Activated naive CD4-positive, alpha-beta T cell treated with anti-CD3 and anti-CD28 coated beads for 36 hours (primary cell): ENCODE measurements at regions of chr12 and their contacts with region 1.

Region 1: GRCh38 chr12:113184900-113185773 is at the starts of genes DDX54 and RITA1:
- DNase-seq: peak; percentile 92
- H3K4me3 Mint-ChIP-seq: peak within 1 kb of the TSS; percentile 97
- H3K27ac Mint-ChIP-seq: peak within 1 kb of the TSS; percentile 92
- H3K4me1 Mint-ChIP-seq: peaks cover 46% of the 10 kb centered on the region
- H3K27me3 Mint-ChIP-seq: no peaks in the 10 kb centered on the region
- total RNA-seq, gene DDX54: 114 to 116 TPM
- total RNA-seq, gene RITA1: 14.0 to 16.1 TPM

Region 2: DNA sequence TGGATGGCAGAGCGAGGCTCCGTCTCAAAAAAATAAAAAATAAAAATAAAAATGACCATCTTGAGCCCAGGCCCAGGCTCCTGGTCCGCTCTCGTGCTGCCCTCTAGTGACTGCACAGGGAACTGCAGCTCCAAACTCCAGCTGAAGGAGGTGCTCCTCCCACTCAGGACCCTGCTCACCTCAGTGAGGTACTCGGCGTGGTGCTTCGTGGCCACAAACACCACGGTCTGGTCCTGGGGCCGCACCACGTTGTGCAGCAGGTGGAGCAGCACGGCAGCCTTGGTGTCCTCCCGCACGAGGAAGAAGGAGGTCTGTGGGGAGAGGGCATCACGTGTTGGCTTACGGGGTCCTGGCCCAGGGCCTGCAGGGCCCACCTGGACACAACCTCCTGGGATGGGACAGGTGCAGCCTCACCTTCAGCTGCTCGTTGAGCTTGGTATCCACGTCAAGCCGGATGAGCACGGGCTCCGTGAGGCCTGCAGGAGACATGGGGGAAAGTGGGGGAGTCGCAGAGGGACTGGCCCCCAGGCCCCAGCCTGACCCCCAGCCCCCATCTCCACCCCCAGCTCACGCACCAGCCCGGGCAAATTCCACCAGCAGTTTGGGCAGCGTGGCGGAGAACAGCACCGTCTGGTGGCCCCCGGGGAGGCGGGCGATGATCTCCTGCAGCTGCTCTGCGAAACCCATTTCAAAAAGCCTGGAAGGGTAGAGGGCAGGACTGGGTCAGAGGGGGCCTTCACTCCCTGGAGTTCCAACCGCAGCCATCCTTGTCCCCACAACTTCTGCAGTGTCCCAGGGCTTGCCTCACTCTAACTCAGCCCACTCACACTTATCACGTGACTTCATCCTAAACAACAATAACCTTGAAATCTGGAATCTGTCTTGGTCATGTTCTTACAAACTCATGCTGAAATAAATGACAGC is 10.4 kb before region 1 on chr12:
- CTCF ChIA-PET with region 1: interaction called, 10 read pairs
- intact Hi-C with region 1: no loop called
- DNase-seq: peak; percentile 86
- H3K4me3 Mint-ChIP-seq: no peak overlapping the region
- H3K27ac Mint-ChIP-seq: no peak overlapping the region
- H3K4me1 Mint-ChIP-seq: no peaks in the 10 kb centered on the region
- H3K27me3 Mint-ChIP-seq: no peaks in the 10 kb centered on the region

Region 3: DNA sequence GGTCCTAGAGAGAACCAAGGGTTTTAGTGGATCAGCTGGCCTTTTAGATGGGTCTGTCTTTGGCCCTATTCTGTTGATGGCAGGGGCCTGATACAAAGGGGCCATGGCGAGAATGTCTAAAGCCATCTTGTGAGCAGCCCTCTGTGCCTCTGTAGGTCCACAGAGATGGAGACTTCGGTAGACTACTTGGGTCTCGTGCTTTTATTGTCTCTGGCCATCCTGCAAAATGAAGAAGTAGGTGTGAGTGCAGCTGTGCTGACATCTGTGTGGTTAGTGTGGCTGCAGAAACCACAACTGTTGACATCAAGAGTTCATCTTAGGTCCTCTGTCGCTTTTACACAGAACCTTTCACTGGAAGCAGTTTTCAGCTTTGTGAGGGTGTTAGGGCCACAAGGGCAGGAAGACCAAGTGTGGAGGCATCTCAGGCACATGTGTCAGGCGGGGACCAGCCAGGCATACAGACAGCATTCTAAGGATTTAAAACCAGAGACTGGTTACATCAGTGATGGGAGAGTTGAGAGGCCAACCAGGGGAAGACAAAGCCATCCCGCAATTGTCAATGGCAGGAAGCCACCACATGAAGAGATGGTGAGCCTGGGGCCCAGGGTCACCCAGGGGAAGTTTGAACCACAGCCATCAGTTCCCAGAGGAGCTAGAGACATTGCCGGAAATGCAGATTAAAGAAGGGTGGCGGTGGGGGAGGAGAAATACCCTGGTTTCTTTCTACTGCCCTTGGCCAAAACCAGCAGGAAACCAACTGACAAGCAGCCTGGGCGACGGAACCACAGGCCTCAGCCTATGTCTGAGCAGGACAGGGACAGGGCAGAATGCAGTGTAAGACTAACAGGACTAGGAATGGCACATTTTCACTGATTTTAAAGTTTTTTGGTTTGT is 23.2 kb after region 1 on chr12:
- CTCF ChIA-PET with region 1: interaction called, 3 read pairs
- intact Hi-C with region 1: loop called (anchors 1 kb)
- DNase-seq: peak; percentile 89
- H3K4me3 Mint-ChIP-seq: peak overlapping the region; percentile 34
- H3K27ac Mint-ChIP-seq: peak overlapping the region; percentile 95
- H3K4me1 Mint-ChIP-seq: peaks cover 41% of the 10 kb centered on the region
- H3K27me3 Mint-ChIP-seq: no peaks in the 10 kb centered on the region

Region 4: GRCh38 chr12:113232840-113233585 is 47.9 kb after region 1 on chr12:
- CTCF ChIA-PET with region 1: interaction called, 3 read pairs
- intact Hi-C with region 1: loop called (anchors 1 kb)
- DNase-seq: peak; percentile 83
- H3K4me3 Mint-ChIP-seq: peak overlapping the region; percentile 66
- H3K27ac Mint-ChIP-seq: peak overlapping the region; percentile 88
- H3K4me1 Mint-ChIP-seq: peaks cover 70% of the 10 kb centered on the region
- H3K27me3 Mint-ChIP-seq: no peaks in the 10 kb centered on the region

Region 5: DNA sequence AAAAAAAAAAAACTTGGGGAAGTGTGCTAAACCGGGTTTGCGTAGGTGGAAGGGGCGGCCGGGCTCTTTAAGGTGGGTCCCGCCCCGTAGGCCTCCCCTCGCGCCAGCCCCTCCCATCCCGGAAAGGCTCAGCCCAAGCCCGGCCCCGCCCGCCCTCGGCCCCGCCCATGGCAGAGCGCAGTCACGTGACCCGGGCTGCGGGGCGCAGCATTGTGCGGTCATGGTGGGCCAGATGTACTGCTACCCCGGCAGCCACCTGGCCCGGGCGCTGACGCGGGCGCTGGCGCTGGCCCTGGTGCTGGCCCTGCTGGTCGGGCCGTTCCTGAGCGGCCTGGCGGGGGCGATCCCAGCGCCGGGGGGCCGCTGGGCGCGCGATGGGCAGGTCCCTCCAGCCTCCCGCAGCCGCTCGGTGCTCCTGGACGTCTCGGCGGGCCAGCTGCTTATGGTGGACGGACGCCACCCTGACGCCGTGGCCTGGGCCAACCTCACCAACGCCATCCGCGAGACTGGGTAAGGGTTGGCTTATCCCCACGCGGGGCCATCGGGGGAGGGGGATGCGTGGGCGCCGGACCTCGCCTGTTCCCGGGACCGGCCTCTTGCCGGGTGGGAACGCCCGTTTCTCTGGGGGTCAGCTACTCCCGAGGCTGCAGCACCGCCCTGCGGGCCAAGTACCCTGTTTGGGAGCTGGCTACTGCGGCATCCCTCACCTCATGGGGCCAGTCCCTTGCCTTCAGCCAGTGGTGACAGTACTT is 173.4 kb after region 1 on chr12 and contains the start of gene PLBD2:
- CTCF ChIA-PET with region 1: no interaction called
- intact Hi-C with region 1: loop called (anchors 1 kb)
- DNase-seq: peak; percentile 96
- H3K4me3 Mint-ChIP-seq: peak within 1 kb of the TSS; percentile 84
- H3K27ac Mint-ChIP-seq: peak within 1 kb of the TSS; percentile 88
- H3K4me1 Mint-ChIP-seq: peaks cover 17% of the 10 kb centered on the region
- H3K27me3 Mint-ChIP-seq: no peaks in the 10 kb centered on the region
- total RNA-seq, gene PLBD2: 13.9 to 14.1 TPM